Panc1 (cell line): ENCODE measurements at regions of chr14 and their contacts with region 1.

Region 1: GRCh38 chr14:56262530-56262929 is 144.3 kb downstream of the PELI2 start:
- DNase-seq: no peak
- ATAC-seq: no peak
- H3K4me3 ChIP-seq: no peak overlapping the region
- H3K27ac ChIP-seq: no peak overlapping the region
- H3K4me1 ChIP-seq: no peaks in the 10 kb centered on the region
- H3K27me3 ChIP-seq: no peaks in the 10 kb centered on the region; the same call in none of the 2 replicates
- CTCF ChIP-seq: no peak

Region 2: GRCh38 chr14:55832122-55832911 is 430.2 kb before region 1 on chr14:
- CTCF ChIA-PET with region 1: no interaction called
- POLR2A ChIA-PET with region 1: interaction called, 10 read pairs
- in situ Hi-C with region 1: no loop called
- intact Hi-C with region 1: no loop called
- DNase-seq: no peak
- ATAC-seq: peak; percentile 78
- H3K4me3 ChIP-seq: no peak overlapping the region
- H3K27ac ChIP-seq: no peak overlapping the region
- H3K4me1 ChIP-seq: no peaks in the 10 kb centered on the region
- H3K27me3 ChIP-seq: no peaks in the 10 kb centered on the region
- CTCF ChIP-seq: no peak

Region 3: DNA sequence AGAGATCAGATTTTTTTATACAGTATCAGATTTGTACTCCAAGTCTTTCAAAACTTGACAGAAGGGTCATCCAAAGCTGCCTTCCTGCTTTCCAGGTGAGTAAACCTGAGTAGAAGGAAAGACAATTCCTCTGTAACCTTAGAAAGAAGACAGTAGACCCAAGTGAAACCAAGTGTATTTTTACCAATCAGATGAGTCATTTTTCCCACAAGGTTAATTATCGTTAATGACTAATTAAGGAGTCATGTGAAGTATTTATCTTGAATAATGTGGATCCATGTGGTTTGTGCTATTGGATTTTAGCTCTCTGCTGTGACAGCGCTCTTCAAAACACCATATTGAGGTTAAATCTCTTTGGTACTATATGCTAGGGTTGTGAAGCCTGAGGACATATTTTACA is 218.3 kb before region 1 on chr14:
- CTCF ChIA-PET with region 1: no interaction called
- POLR2A ChIA-PET with region 1: no interaction called
- in situ Hi-C with region 1: no loop called
- intact Hi-C with region 1: no loop called
- DNase-seq: no peak
- ATAC-seq: no peak
- H3K4me3 ChIP-seq: no peak overlapping the region
- H3K27ac ChIP-seq: no peak overlapping the region
- H3K4me1 ChIP-seq: no peaks in the 10 kb centered on the region
- H3K27me3 ChIP-seq: 0 out of 2 replicates have a peak, but pooled peaks cover 2% of the 10 kb centered on the region
- CTCF ChIP-seq: no peak